ENCODE measurements at regions of chr17 and their contacts with region 1.

Region 1: GRCh38 chr17:31842183-31843069 is 16.6 kb downstream of the COPRS start:
- DNase-seq: peak; percentile 77
- ATAC-seq: peak; percentile 94
- H3K4me3 ChIP-seq: no peak overlapping the region; the same call in 1 of the 2 replicates
- H3K27ac ChIP-seq: no peak overlapping the region; the same call in 1 of the 2 replicates
- H3K4me1 ChIP-seq: peaks cover 12% of the 10 kb centered on the region
- H3K27me3 ChIP-seq: no peaks in the 10 kb centered on the region
- CTCF ChIP-seq: peak; percentile 95
- POLR2A ChIP-seq: peak; percentile 61; the same call in 1 of the 2 replicates
- RAD21 ChIP-seq: peak; percentile 98

Region 2: DNA sequence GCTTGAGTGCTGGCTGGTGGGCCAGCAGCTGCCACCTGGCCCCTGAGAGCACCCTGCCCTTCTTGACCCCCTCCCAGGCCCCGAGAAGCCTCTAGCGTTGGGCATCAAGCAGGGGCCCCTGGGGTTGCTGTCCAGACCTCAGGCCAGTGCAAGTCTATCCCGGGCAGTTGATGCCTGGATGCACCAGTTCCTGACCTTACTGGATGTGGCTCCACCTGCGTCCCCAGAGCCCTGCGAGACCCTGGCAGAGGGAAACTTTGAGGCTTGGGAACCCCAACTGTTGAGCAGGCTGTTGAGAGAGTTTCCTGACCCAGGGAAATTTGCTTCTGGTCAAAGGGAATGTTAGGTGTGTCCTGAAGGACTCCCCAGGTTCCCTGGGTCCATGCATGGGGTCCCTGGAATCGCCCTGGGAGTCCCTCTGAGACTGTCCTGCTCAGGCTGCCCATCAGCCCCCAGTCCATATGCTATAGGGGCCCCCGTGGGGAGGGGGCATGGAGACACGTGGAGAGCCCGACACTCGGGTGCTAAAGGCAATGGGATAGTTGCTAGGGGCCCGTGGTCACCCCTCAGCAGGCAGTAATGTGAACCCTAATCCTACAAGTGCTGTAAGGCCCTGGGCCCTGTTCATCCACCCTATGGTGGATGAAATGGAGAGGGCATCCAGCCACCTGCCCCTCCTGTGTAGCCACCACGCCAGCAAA is 404.6 kb before region 1 on chr17:
- CTCF ChIA-PET with region 1: interaction called, 6 read pairs
- POLR2A ChIA-PET with region 1: no interaction called
- dilution Hi-C with region 1: no loop called
- in situ Hi-C with region 1: loop called (anchors 5 kb)
- intact Hi-C with region 1: loop called (anchors 1 kb)
- DNase-seq: no peak
- ATAC-seq: 0 out of 2 replicates have a peak, but pooled peaks have one; percentile 7
- H3K4me3 ChIP-seq: no peak overlapping the region
- H3K27ac ChIP-seq: no peak overlapping the region
- H3K4me1 ChIP-seq: no peaks in the 10 kb centered on the region
- H3K27me3 ChIP-seq: peaks cover 32% of the 10 kb centered on the region
- CTCF ChIP-seq: no peak
- POLR2A ChIP-seq: no peak
- RAD21 ChIP-seq: no peak

Region 3: GRCh38 chr17:31524926-31525800 is 317.3 kb before region 1 on chr17:
- CTCF ChIA-PET with region 1: interaction called, 5 read pairs
- POLR2A ChIA-PET with region 1: interaction called, 3 read pairs
- dilution Hi-C with region 1: no loop called
- in situ Hi-C with region 1: no loop called
- intact Hi-C with region 1: loop called (anchors 1 kb)
- DNase-seq: peak; percentile 93
- ATAC-seq: peak; percentile 94
- H3K4me3 ChIP-seq: no peak overlapping the region
- H3K27ac ChIP-seq: no peak overlapping the region
- H3K4me1 ChIP-seq: peaks cover 1% of the 10 kb centered on the region; the same call in 1 of the 2 replicates
- H3K27me3 ChIP-seq: peaks cover 2% of the 10 kb centered on the region; the same call in 1 of the 2 replicates
- CTCF ChIP-seq: peak; percentile 96
- POLR2A ChIP-seq: no peak
- RAD21 ChIP-seq: peak; percentile 97

Region 4: DNA sequence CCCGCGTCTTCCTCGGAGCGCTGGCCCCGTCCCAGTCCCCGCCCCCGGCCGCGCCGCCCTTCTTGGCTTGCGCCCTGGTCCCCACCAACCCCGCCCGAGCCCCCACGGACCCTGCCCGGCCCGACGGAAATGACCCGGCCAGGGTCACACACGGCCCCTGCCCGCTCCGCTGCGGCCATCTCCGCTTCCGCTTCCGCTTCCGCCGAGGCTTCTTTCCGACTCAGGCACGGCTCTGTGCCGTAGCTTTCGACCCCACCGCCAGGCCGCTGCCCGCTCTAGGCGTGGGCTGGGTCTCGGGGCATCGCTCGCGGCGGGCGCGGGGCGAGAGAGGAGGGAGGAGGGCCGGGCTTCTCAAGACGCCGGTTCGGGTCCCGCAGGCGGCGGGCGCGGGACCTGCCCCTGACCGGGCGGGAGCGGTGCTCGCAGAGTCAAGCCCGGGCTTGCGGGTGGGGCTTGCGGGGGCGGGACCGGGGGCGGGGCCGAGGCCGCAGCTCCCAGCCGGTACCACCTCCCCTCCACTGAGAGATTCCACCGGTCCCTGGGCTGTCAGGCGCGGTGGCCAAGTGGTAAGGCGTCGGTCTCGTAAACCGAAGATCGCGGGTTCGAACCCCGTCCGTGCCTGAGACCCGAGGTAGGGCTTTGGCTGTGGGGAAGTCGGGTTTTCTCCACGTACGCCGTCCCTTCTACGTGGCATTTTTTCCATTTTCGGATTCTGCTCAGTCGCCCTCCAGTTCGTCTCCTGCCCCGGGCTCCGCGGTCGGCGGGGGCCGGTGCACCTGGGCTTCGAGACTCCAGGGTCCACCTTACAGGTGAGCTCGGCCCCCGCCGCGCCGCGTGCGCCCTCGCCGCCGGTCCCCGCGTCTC is 292.7 kb before region 1 on chr17:
- CTCF ChIA-PET with region 1: interaction called, 10 read pairs
- POLR2A ChIA-PET with region 1: no interaction called
- dilution Hi-C with region 1: no loop called
- in situ Hi-C with region 1: loop called (anchors 5 kb)
- intact Hi-C with region 1: no loop called
- DNase-seq: peak; percentile 92
- ATAC-seq: peak; percentile 92
- H3K4me3 ChIP-seq: peak overlapping the region; percentile 74
- H3K27ac ChIP-seq: peak overlapping the region; percentile 84
- H3K4me1 ChIP-seq: no peaks in the 10 kb centered on the region; the same call in 1 of the 2 replicates
- H3K27me3 ChIP-seq: no peaks in the 10 kb centered on the region
- CTCF ChIP-seq: no peak
- POLR2A ChIP-seq: no peak
- RAD21 ChIP-seq: peak; percentile 10

Region 5: GRCh38 chr17:31696184-31696602 is 146.2 kb before region 1 on chr17:
- CTCF ChIA-PET with region 1: interaction called, 3 read pairs
- POLR2A ChIA-PET with region 1: no interaction called
- dilution Hi-C with region 1: no loop called
- in situ Hi-C with region 1: no loop called
- intact Hi-C with region 1: loop called (anchors 2 kb)
- DNase-seq: peak; percentile 88
- ATAC-seq: peak; percentile 92
- H3K4me3 ChIP-seq: no peak overlapping the region
- H3K27ac ChIP-seq: peak overlapping the region; percentile 62
- H3K4me1 ChIP-seq: peaks cover 18% of the 10 kb centered on the region
- H3K27me3 ChIP-seq: no peaks in the 10 kb centered on the region
- CTCF ChIP-seq: no peak; the same call in 1 of the 2 replicates
- POLR2A ChIP-seq: no peak
- RAD21 ChIP-seq: peak; percentile 36

Region 6: DNA sequence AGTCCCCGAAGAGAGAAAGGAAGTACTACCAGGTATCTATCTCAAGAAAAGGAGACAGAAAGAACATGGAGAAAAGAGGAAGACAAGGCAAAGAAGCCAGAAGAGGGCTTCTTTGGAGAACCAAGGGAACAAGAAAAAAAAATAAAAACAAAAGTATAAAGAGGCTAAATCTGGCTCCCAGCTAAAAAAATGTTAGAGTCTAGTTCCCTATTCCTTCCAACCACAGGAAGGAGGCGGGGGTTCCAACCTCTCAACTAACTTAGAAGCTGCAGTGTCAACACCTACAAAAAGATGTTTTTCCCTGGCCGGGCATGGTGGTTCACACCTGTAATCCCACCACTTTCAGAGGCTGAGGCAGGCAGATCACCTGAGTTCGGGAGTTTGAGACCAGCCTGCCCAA is 45.7 kb after region 1 on chr17:
- CTCF ChIA-PET with region 1: no interaction called
- POLR2A ChIA-PET with region 1: no interaction called
- dilution Hi-C with region 1: no loop called
- in situ Hi-C with region 1: no loop called
- intact Hi-C with region 1: no loop called
- DNase-seq: no peak
- ATAC-seq: no peak
- H3K4me3 ChIP-seq: no peak overlapping the region
- H3K27ac ChIP-seq: no peak overlapping the region
- H3K4me1 ChIP-seq: no peaks in the 10 kb centered on the region
- H3K27me3 ChIP-seq: no peaks in the 10 kb centered on the region
- CTCF ChIP-seq: no peak
- POLR2A ChIP-seq: no peak
- RAD21 ChIP-seq: no peak